ENCODE measurements at regions of chr15 and their contacts with region 1.

Region 1: DNA sequence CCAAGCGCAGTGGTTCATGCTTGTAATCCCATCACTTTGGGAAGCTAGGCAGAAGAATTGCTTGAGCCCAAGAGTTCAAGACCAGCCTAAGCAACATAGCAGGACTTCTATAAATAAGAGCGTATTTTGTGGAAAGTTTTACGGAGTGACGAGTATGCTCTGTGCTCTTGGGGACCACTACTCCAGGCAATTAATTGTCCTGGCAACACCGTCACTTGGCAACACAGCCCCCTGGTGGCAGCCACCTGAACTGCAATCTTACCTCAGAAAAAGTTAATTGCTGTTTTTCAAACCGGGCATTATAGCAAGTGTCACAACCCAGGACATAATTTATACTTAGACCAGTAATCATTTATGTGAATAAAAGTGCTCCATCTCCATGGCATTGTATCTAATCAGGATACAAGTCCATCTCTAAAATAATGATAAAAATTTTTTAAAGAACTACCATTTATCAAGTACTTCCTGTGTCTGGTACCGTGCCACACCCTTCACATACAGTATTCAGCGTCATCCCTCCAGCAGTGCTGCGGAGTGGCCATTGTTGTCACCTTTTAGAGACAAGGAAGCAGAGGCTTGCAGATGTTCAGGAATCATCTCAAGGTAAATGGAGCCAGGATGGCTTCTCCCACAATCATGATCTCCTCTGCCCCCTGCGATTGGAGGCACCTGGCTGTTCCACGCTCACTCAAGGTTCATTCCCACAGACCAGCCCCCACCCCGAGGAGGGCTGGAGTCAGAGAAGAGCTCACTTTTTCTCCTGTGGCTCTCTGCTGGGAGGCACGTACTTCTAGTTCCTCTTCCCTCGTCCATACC is 34.5 kb downstream of the PLA2G4D start:
- DNase-seq: peak in 37 of 42 donors; percentile 21 to 86 (median 65)

Region 2: GRCh38 chr15:41730543-41730942 is 329.3 kb before region 1 on chr15:
- intact Hi-C with region 1: no loop called
- DNase-seq: no peak

Region 3: GRCh38 chr15:41989259-41989933 is 70.5 kb before region 1 on chr15:
- intact Hi-C with region 1: loop called (anchors 5 kb)
- DNase-seq: peak; percentile 67 to 96 (median 90)

Region 4: GRCh38 chr15:42102646-42103235 is 42.9 kb after region 1 on chr15:
- intact Hi-C with region 1: no loop called
- DNase-seq: no peak

Measured in head of caudate nucleus (tissue), 42 donors.